Tibial artery (tissue), 4 donors: ENCODE measurements at regions of chr12 and their contacts with region 1.

Region 1: DNA sequence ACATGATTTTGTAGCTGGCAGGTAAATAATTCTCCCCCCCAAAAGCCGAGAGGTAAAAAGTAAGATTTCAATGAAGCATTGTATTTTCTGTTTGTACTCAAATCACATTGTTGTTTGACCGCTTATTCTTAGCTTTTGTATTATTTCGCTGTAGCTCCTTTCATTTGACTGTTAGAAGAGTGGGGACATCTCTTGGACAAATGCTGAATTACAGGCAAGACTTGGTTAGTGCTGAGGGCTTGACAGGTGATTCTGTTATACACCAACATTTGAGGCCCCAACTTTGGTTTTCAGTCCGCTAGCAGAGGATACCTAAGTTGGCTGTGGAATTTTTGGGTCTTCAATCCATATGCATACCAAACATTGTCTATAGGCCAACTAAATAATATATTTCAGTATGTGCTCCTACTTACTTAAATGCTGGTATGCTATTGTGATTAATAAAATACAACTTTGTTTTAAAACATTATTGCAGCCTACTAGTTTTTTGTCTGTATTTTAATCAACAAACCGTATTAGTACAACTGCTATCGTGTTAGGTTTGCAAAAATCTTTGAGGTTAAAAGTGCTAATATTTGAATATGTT is 102.2 kb downstream of the ERC1 start:
- DNase-seq: no peak
- H3K4me3 ChIP-seq: no peak overlapping the region
- H3K27ac ChIP-seq: no peak overlapping the region
- H3K4me1 ChIP-seq: peaks cover 0 to 20% (median 6%) of the 10 kb centered on the region in 4 donors
- H3K27me3 ChIP-seq: no peaks in the 10 kb centered on the region
- CTCF ChIP-seq: peak; percentile 69 to 70

Region 2: DNA sequence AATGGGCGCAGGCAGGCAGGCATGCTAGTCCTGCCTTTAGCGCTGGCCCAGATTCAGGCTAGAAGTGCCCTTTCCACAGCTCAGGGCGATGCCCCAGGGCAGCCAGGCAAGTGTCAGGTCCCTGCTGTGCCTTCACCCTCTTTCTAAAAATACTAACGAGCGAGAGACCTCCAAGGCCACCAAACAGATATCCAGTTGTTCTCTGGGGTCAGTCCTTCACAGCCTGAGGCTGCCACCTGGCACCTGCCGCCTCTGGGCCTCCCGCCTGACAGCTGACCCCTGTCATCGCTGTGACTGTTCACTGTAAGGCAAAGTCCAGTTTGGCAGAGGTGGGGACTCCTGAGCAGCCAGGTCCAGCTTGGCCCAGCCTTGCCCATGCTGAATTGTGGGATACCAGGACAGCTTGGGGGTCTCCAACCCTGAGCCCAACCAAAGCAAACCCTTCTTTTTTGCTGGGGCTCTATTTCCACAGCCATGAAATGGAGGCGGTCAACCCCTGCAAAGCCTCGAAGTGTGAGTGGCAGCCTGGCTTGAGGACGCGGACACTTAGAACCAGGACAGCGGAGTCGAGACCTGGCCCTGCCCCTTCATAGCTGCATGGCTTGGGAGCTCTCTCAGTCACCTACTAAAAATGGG is 509.9 kb before region 1 on chr12:
- intact Hi-C with region 1: loop called (anchors 10 kb)
- DNase-seq: no peak
- H3K4me3 ChIP-seq: no peak overlapping the region
- H3K27ac ChIP-seq: no peak overlapping the region
- H3K4me1 ChIP-seq: no peaks in the 10 kb centered on the region
- H3K27me3 ChIP-seq: no peaks in the 10 kb centered on the region
- CTCF ChIP-seq: no peak

Region 3: DNA sequence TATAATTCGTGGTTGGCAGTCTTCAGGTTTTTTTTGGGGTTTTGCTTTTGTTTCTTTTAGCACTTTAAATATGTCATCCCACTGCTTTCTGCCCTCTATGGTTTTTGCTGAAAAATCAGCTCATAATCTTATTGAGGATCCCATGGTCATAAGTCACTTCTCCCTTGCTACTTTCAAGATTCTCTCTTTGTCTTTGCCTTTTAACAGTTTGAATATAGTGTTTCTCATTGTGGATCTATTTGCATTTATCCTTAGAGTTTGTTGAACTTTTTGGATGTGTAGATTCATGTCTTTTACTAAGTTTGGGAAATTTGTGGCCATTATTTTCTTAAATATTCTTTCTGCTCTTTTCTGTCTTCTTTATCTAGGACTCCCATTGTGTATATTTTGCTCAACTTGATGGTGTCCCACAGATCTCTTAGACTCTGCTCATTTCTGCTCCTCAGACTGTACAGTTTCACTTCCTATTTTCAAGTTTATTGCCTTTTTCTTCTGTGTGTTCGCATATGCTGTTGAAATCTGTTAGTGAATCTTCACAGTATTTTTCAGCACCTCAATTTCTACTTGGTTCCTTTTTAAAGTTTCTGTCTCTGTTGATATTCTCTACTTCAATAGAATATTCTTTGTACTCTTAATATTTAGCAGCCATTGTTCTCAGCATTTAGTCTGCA is 270.1 kb before region 1 on chr12:
- intact Hi-C with region 1: loop called (anchors 5 kb)
- DNase-seq: no peak
- H3K4me3 ChIP-seq: no peak overlapping the region
- H3K27ac ChIP-seq: no peak overlapping the region
- H3K4me1 ChIP-seq: peaks cover 0 to 33% (median 11%) of the 10 kb centered on the region in 4 donors
- H3K27me3 ChIP-seq: no peaks in the 10 kb centered on the region
- CTCF ChIP-seq: no peak

Region 4: GRCh38 chr12:913919-914708 is 179.1 kb before region 1 on chr12:
- intact Hi-C with region 1: no loop called
- DNase-seq: no peak
- H3K4me3 ChIP-seq: no peak overlapping the region
- H3K27ac ChIP-seq: no peak overlapping the region
- H3K4me1 ChIP-seq: peaks cover 0 to 13% (median 3%) of the 10 kb centered on the region in 4 donors
- H3K27me3 ChIP-seq: no peaks in the 10 kb centered on the region
- CTCF ChIP-seq: no peak

Region 5: GRCh38 chr12:949453-950191 is 143.6 kb before region 1 on chr12 and contains the start of gene RAD52:
- intact Hi-C with region 1: loop called (anchors 5 kb)
- DNase-seq: peak; percentile 96 to 99
- H3K4me3 ChIP-seq: peak within 1 kb of the TSS; percentile 84
- H3K27ac ChIP-seq: peak within 1 kb of the TSS; percentile 85 to 90
- H3K4me1 ChIP-seq: peaks cover 0 to 27% (median 9%) of the 10 kb centered on the region in 4 donors
- H3K27me3 ChIP-seq: no peaks in the 10 kb centered on the region
- CTCF ChIP-seq: peak; percentile 96 to 99

Region 6: DNA sequence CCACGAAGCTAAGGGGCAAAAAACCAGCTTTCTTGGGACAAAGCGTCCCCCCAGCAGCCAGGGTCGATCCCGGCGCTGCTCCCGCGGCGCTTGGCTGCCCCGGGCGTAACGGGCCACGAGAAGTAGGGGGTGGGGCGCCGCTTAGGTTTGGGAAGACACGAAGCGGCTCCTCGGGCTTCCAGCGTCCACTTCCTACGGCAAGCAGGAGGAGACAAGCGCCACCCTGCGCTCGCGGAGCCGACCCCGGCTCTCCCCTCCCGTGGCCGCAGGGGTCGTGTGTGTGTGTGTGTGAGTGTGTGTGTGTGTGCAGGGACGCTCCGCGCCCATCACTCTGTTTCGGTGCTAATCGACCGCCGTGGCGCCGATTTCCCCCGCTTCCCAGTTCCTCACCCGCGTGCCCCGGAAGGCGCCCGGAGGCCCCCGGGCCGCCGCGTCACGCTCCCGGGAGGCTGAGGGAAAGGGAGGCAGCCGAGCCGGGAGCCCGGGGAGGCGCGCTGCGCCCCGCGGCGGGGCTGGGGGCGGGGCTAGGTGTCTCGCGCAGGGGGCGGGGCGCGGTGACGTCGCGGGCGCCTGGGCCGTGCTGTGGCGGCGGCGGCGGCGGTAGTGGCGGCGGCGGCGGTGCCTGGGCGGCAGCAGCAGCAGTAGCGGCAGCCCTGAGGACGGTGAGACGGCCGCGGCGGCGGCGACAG is 102.5 kb before region 1 on chr12 and contains the start of gene ERC1:
- intact Hi-C with region 1: loop called (anchors 10 kb)
- DNase-seq: peak; percentile 82 to 93
- H3K4me3 ChIP-seq: peak within 1 kb of the TSS; percentile 98
- H3K27ac ChIP-seq: peak within 1 kb of the TSS; percentile 98 to 99
- H3K4me1 ChIP-seq: peaks cover 0 to 39% (median 27%) of the 10 kb centered on the region in 4 donors
- H3K27me3 ChIP-seq: no peaks in the 10 kb centered on the region
- CTCF ChIP-seq: no peak